GM12878 (cell line): ENCODE measurements at regions of chr4 and their contacts with region 1.

Region 1: GRCh38 chr4:1809754-1810511 is 16.8 kb downstream of the FGFR3 start:
- DNase-seq: no peak
- ATAC-seq: peak; percentile 97
- H3K4me3 ChIP-seq: no peak overlapping the region
- H3K27ac ChIP-seq: no peak overlapping the region
- H3K4me1 ChIP-seq: no peaks in the 10 kb centered on the region; the same call in 1 of the 2 replicates
- H3K27me3 ChIP-seq: no peaks in the 10 kb centered on the region
- CTCF ChIP-seq: peak; percentile 86 to 93 (median 89)
- EP300 ChIP-seq: no peak
- POLR2A ChIP-seq: peak; percentile 10; the same call in 1 of the 2 replicates
- RAD21 ChIP-seq: peak; percentile 81

Region 2: GRCh38 chr4:1746265-1746691 is 63.7 kb before region 1 on chr4:
- CTCF ChIA-PET with region 1: interaction called, 60 read pairs
- POLR2A ChIA-PET with region 1: no interaction called
- RAD21 ChIA-PET with region 1: interaction called, 20 read pairs
- SMC1A ChIA-PET with region 1: interaction called, 7 read pairs
- in situ Hi-C with region 1: loop called (anchors 5 kb)
- intact Hi-C with region 1: loop called (anchors 1 kb)
- DNase-seq: no peak
- ATAC-seq: peak; percentile 93
- H3K4me3 ChIP-seq: no peak overlapping the region
- H3K27ac ChIP-seq: no peak overlapping the region
- H3K4me1 ChIP-seq: no peaks in the 10 kb centered on the region
- H3K27me3 ChIP-seq: no peaks in the 10 kb centered on the region
- CTCF ChIP-seq: peak; percentile 65 to 93 (median 78)
- EP300 ChIP-seq: no peak
- POLR2A ChIP-seq: no peak
- RAD21 ChIP-seq: peak; percentile 69